ENCODE measurements at regions of chr12 and their contacts with region 1.

Region 1: DNA sequence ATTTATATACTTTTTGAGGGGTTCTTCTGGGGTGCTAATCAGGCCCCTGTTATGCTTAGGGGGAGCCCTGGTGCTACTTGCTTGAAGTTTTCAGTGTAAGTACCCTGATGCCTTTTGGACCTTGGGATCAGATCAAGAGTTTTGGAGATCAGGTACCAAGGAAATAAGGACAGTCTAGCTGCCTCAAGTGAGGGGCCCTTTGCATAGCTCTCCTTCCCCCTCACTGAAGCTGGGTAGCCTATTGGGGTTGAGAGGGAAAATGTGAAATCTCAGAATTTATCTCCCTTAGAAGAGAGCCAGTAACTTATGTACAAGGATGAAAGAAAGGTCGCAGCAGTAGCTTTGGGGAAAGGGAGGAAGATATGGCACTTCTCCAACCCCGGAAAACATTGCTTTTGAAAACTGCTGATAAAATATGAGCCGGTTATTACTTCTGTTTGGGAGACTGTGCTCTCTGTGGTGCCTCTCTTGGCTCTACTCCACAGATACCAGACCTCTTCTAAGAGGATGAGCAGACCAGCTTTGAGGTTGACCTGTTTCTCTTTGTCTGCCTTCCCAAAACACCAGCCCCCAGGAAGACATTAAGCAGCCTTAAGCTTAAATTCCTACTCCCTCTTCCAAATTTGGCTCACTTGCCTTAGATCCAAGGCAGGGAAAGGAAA is 8.8 kb upstream of the AMHR2 start:
- DNase-seq: no peak
- H3K4me3 Mint-ChIP-seq: no peak overlapping the region
- H3K27ac Mint-ChIP-seq: no peak overlapping the region
- H3K4me1 Mint-ChIP-seq: peaks cover 54% of the 10 kb centered on the region
- H3K27me3 Mint-ChIP-seq: no peaks in the 10 kb centered on the region

Region 2: DNA sequence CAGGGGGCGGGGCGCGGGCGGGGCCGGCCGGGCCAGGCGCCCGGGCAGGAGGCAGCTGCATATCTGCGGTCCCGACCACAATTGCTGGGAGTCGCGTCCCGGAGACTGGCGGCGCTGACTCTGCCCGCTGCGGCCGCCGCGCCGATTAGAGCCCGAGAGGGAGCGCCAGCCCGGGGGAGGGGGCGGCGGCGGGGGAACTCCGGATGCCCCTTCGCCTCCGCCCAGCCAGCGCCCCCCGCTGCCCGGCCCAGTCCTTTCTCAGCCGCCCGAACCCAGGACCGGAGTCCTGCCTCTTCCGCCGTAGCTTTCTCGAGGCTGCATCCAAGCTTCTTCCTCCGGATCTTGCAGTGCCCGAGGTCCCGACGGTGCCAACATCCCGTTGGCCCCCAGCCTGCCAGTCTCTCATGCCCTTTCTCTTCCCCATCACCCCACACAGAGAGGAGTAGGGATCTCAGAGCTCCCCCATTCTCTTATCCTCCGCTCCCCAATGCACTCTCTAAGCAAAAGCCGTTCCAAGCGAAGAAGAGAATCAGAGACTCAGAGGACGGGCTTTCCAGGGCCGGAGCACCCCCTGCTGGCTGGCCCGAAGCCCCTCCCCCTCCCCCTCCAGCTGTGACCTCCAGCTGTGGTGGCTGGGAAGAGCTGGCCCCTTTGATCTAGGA is 69.9 kb before region 1 on chr12:
- CTCF ChIA-PET with region 1: interaction called, 207 read pairs
- POLR2A ChIA-PET with region 1: no interaction called
- intact Hi-C with region 1: no loop called
- DNase-seq: peak; percentile 86
- H3K4me3 Mint-ChIP-seq: peak overlapping the region; percentile 92
- H3K27ac Mint-ChIP-seq: peak overlapping the region; percentile 56
- H3K4me1 Mint-ChIP-seq: peaks cover 14% of the 10 kb centered on the region
- H3K27me3 Mint-ChIP-seq: no peaks in the 10 kb centered on the region

Region 3: DNA sequence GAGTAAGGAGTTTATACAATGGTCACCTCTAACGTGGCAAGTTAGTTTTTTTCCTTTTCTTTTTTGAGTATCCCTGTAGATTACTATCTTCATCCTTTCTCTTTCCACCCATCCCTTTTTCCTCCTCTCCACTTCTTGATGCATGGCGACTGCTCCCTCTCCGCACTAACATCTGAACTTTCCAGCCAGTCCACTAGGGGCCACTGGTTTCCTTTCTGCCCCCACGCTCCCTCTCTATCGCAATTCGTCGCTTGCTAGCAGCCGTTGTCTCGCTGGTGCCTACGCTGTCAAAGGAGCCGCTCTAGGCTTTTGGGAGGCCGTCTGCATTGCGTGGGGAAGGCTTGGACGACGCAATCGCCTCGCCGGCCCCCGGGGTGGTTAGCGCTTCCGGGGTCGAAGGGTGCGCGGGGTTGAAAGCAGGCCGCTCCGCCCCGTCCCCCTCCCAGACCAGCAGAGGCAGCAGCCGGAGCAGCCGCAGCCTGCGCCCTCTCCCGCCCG is 36.8 kb after region 1 on chr12 and contains the start of gene PCBP2:
- CTCF ChIA-PET with region 1: no interaction called
- POLR2A ChIA-PET with region 1: no interaction called
- intact Hi-C with region 1: no loop called
- DNase-seq: peak; percentile 99
- H3K4me3 Mint-ChIP-seq: peak within 1 kb of the TSS; percentile 94
- H3K27ac Mint-ChIP-seq: peak within 1 kb of the TSS; percentile 98
- H3K4me1 Mint-ChIP-seq: peaks cover 23% of the 10 kb centered on the region
- H3K27me3 Mint-ChIP-seq: no peaks in the 10 kb centered on the region
- total RNA-seq, gene PCBP2: 897 to 926 TPM